ENCODE measurements at regions of chr5 and their contacts with region 1.

Region 1: DNA sequence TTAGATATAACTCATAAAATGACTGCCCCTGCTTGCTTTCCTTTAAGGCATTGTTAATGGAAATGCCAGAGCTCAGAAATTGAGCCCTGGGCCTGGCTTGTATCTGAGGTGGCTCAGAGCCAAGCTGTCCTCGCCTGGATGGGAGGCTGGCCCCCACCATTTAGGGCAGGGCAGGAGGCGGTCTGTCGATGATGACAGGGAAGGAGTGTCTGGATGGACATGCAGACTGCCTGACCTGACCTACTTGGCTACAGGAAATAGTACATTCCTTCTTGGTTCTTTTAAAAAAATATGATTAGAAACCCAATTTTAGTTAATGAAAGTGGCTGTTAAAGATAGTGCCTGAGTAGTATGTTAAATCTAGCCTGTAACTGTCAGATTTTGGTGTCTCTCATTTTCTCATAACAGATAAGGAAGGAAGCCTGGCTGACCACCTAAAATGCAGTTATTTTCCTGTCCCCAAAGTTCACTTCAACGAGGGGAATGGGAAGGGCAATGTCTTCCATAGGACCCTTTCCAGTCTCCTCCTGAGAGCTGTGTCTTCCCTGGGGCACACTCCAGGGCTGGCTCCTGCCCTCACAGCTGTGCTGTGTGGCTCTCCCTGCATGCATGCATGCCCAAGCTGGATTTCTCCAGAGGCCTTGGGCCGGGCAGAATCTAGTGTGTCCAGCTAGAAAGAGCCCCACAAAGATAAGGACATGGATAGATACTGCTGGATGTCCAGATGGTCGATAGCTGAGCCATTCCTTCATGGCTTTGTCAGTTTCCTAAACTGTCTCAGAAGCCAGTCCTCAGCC is 42.3 kb downstream of the MACROH2A1 start:
- DNase-seq: peak; percentile 67
- ATAC-seq: peak; percentile 53
- H3K4me3 ChIP-seq: no peak overlapping the region
- H3K27ac ChIP-seq: peak overlapping the region; percentile 31; the same call in 1 of the 2 replicates
- H3K4me1 ChIP-seq: peaks cover 53% of the 10 kb centered on the region
- H3K27me3 ChIP-seq: no peaks in the 10 kb centered on the region
- CTCF ChIP-seq: no peak
- POLR2A ChIP-seq: no peak
- RAD21 ChIP-seq: no peak

Region 2: GRCh38 chr5:135392256-135392655 is 35.5 kb after region 1 on chr5:
- CTCF ChIA-PET with region 1: no interaction called
- POLR2A ChIA-PET with region 1: no interaction called
- dilution Hi-C with region 1: no loop called
- in situ Hi-C with region 1: no loop called
- intact Hi-C with region 1: loop called (anchors 2 kb)
- DNase-seq: peak; percentile 88
- ATAC-seq: peak; percentile 36
- H3K4me3 ChIP-seq: no peak overlapping the region
- H3K27ac ChIP-seq: peak overlapping the region; percentile 55
- H3K4me1 ChIP-seq: peaks cover 46% of the 10 kb centered on the region
- H3K27me3 ChIP-seq: no peaks in the 10 kb centered on the region
- CTCF ChIP-seq: no peak
- POLR2A ChIP-seq: no peak
- RAD21 ChIP-seq: no peak

Region 3: GRCh38 chr5:135426102-135427082 is 69.7 kb after region 1 on chr5:
- CTCF ChIA-PET with region 1: interaction called, 3 read pairs
- POLR2A ChIA-PET with region 1: no interaction called
- dilution Hi-C with region 1: no loop called
- in situ Hi-C with region 1: no loop called
- intact Hi-C with region 1: loop called (anchors 2 kb)
- DNase-seq: peak; percentile 61
- ATAC-seq: peak; percentile 93
- H3K4me3 ChIP-seq: no peak overlapping the region
- H3K27ac ChIP-seq: no peak overlapping the region
- H3K4me1 ChIP-seq: no peaks in the 10 kb centered on the region
- H3K27me3 ChIP-seq: no peaks in the 10 kb centered on the region
- CTCF ChIP-seq: peak; percentile 71
- POLR2A ChIP-seq: no peak
- RAD21 ChIP-seq: peak; percentile 74

Region 4: GRCh38 chr5:135551593-135552447 is 195.1 kb after region 1 on chr5:
- CTCF ChIA-PET with region 1: no interaction called
- POLR2A ChIA-PET with region 1: no interaction called
- dilution Hi-C with region 1: no loop called
- in situ Hi-C with region 1: no loop called
- intact Hi-C with region 1: loop called (anchors 10 kb)
- DNase-seq: peak; percentile 75
- ATAC-seq: peak; percentile 92
- H3K4me3 ChIP-seq: no peak overlapping the region
- H3K27ac ChIP-seq: no peak overlapping the region
- H3K4me1 ChIP-seq: no peaks in the 10 kb centered on the region
- H3K27me3 ChIP-seq: peaks cover 59% of the 10 kb centered on the region
- CTCF ChIP-seq: peak; percentile 91
- POLR2A ChIP-seq: no peak
- RAD21 ChIP-seq: peak; percentile 91